ENCODE measurements at regions of chr9 and their contacts with region 1.

Region 1: DNA sequence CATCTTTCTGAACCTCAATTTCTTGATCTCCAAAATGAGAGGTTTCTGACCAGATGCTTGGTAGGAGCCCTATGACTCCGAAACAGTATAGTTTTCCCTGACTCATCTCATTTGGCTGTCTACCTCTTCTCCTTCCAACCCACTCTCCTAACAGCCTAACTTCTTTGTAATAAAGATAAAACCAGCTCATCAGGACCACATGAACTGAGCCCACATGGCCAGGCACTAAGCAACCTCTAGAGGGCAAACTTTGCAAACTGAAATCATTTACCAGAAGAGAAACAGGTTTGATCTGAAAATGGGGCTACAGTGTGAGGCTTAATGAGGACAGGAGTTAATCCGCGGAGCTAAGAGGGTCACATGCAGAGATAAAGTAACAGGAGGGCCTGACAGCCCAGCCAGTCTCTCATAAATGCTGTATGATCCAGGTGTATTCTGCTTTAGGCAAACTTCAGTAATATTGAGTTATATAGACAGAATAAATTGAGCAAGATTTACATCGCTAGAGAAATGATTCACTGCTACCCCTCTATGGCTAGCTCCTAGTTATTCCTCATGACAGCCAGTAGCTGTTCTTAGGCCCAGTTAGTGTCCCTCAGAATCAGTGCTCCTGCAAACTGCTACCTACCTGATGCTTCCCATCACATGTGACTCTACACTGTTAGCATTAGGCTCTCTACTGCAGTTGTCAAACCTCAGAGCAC is 64.6 kb downstream of the ABCA1 start:
- DNase-seq: peak; percentile 83
- H3K4me3 Mint-ChIP-seq: no peak overlapping the region
- H3K27ac Mint-ChIP-seq: no peak overlapping the region
- H3K4me1 Mint-ChIP-seq: peaks cover 11% of the 10 kb centered on the region
- H3K27me3 Mint-ChIP-seq: no peaks in the 10 kb centered on the region
- CTCF ChIP-seq: peak; percentile 74

Region 2: DNA sequence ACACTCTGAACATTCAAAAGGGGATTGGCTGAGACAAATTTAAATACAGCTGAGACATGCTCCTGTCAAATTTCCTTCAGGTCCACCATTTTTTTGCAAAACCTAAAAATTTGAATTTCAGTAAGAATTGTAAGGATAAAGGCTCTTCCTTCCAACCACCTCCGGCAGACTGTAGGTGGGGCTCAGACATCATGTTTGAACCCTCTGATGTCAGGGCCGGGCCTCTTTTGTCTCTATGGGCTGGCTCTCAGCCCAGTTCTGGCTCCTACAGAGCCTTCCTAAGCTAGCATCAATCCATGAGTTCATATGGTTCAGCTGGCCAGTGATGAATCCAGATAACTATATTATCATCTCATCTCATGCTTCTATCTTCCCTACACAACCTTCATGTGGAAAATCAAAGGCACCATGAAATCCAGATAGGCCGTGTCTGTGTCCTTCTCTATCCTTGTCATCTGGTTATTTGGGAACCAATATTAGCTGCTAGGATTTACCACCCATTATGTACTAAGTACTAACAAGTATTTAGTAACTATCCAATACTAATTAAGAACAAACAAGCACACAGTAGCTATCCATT is 55.2 kb before region 1 on chr9:
- CTCF ChIA-PET with region 1: interaction called, 3 read pairs
- POLR2A ChIA-PET with region 1: no interaction called
- intact Hi-C with region 1: loop called (anchors 5 kb)
- DNase-seq: peak; percentile 63
- H3K4me3 Mint-ChIP-seq: no peak overlapping the region
- H3K27ac Mint-ChIP-seq: no peak overlapping the region
- H3K4me1 Mint-ChIP-seq: peaks cover 19% of the 10 kb centered on the region
- H3K27me3 Mint-ChIP-seq: no peaks in the 10 kb centered on the region
- CTCF ChIP-seq: peak; percentile 19

Region 3: GRCh38 chr9:104875897-104876296 is 12.6 kb after region 1 on chr9:
- CTCF ChIA-PET with region 1: interaction called, 10 read pairs
- POLR2A ChIA-PET with region 1: interaction called, 5 read pairs
- intact Hi-C with region 1: no loop called
- DNase-seq: no peak
- H3K4me3 Mint-ChIP-seq: no peak overlapping the region
- H3K27ac Mint-ChIP-seq: no peak overlapping the region
- H3K4me1 Mint-ChIP-seq: peaks cover 32% of the 10 kb centered on the region
- H3K27me3 Mint-ChIP-seq: no peaks in the 10 kb centered on the region
- CTCF ChIP-seq: no peak

Region 4: GRCh38 chr9:104984948-104985347 is 121.6 kb after region 1 on chr9:
- CTCF ChIA-PET with region 1: interaction called, 11 read pairs
- POLR2A ChIA-PET with region 1: no interaction called
- intact Hi-C with region 1: loop called (anchors 2 kb)
- DNase-seq: no peak
- H3K4me3 Mint-ChIP-seq: no peak overlapping the region
- H3K27ac Mint-ChIP-seq: no peak overlapping the region
- H3K4me1 Mint-ChIP-seq: peaks cover 12% of the 10 kb centered on the region
- H3K27me3 Mint-ChIP-seq: no peaks in the 10 kb centered on the region
- CTCF ChIP-seq: no peak

Region 5: GRCh38 chr9:105064315-105065097 is 201.2 kb after region 1 on chr9:
- CTCF ChIA-PET with region 1: interaction called, 7 read pairs
- POLR2A ChIA-PET with region 1: no interaction called
- intact Hi-C with region 1: loop called (anchors 2 kb)
- DNase-seq: peak; percentile 97
- H3K4me3 Mint-ChIP-seq: peak overlapping the region; percentile 47
- H3K27ac Mint-ChIP-seq: peak overlapping the region; percentile 92
- H3K4me1 Mint-ChIP-seq: peaks cover 16% of the 10 kb centered on the region
- H3K27me3 Mint-ChIP-seq: no peaks in the 10 kb centered on the region
- CTCF ChIP-seq: no peak

Region 6: GRCh38 chr9:105150991-105151685 is 287.8 kb after region 1 on chr9:
- CTCF ChIA-PET with region 1: interaction called, 115 read pairs
- POLR2A ChIA-PET with region 1: interaction called, 9 read pairs
- intact Hi-C with region 1: no loop called
- DNase-seq: peak; percentile 17
- H3K4me3 Mint-ChIP-seq: no peak overlapping the region
- H3K27ac Mint-ChIP-seq: no peak overlapping the region
- H3K4me1 Mint-ChIP-seq: peaks cover 17% of the 10 kb centered on the region
- H3K27me3 Mint-ChIP-seq: no peaks in the 10 kb centered on the region
- CTCF ChIP-seq: no peak